Breast epithelium (tissue), 4 donors: ENCODE measurements at regions of chr2 and their contacts with region 1.

Region 1: GRCh38 chr2:217928324-217929181 is 74.2 kb downstream of the TNS1 start:
- DNase-seq: peak in 1 of 2 donors; percentile 64
- H3K4me3 ChIP-seq: peak overlapping the region in 1 of 3 donors; percentile 28
- H3K27ac ChIP-seq: peak overlapping the region; percentile 91 to 96
- H3K4me1 ChIP-seq: peaks cover 17 to 43% of the 10 kb centered on the region in 2 donors
- H3K27me3 ChIP-seq: no peaks in the 10 kb centered on the region
- CTCF ChIP-seq: no peak
- POLR2A ChIP-seq: no peak

Region 2: GRCh38 chr2:217980036-217980435 is 51.5 kb after region 1 on chr2:
- intact Hi-C with region 1: loop called (anchors 2 kb)
- DNase-seq: no peak
- H3K4me3 ChIP-seq: peak overlapping the region in 1 of 3 donors; percentile 78
- H3K27ac ChIP-seq: peak overlapping the region; percentile 89 to 92
- H3K4me1 ChIP-seq: peaks cover 17 to 28% of the 10 kb centered on the region in 2 donors
- H3K27me3 ChIP-seq: no peaks in the 10 kb centered on the region
- CTCF ChIP-seq: no peak
- POLR2A ChIP-seq: no peak